Cardiac septum (tissue), 1 donor: ENCODE measurements at regions of chr9 and their contacts with region 1.

Region 1: DNA sequence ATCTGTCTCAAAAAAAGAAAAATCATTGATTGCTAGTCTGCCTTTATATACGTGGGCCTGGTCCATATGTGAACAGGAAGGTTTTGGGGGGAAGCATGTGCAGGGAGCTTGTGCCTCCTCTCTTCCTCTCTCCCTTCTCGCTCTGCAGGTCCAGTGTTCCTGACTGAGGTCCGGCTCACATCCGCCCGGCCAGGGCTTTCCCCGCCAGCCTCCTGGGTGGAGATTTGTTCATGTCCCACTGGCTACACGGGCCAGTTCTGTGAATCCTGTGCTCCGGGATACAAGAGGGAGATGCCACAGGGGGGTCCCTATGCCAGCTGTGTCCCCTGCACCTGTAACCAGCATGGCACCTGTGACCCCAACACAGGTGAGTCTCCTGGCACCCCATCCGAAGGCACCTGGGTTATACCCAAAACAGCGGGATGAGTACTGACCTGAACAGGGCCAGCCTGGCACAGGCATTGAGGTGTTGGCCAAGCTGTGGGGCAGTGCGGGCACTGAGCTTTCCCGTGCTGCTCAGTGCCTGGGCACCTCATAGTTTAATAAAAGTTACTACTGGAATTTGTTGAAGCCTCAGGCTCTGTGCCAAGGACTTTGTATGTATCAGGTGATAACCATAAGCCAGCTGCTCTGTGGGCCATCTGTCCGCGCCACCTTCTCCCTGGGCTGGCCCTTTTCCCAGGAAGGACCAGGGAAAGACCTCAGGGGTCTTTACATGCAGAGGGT is 39.4 kb upstream of the AIF1L start:
- DNase-seq: no peak

Region 2: DNA sequence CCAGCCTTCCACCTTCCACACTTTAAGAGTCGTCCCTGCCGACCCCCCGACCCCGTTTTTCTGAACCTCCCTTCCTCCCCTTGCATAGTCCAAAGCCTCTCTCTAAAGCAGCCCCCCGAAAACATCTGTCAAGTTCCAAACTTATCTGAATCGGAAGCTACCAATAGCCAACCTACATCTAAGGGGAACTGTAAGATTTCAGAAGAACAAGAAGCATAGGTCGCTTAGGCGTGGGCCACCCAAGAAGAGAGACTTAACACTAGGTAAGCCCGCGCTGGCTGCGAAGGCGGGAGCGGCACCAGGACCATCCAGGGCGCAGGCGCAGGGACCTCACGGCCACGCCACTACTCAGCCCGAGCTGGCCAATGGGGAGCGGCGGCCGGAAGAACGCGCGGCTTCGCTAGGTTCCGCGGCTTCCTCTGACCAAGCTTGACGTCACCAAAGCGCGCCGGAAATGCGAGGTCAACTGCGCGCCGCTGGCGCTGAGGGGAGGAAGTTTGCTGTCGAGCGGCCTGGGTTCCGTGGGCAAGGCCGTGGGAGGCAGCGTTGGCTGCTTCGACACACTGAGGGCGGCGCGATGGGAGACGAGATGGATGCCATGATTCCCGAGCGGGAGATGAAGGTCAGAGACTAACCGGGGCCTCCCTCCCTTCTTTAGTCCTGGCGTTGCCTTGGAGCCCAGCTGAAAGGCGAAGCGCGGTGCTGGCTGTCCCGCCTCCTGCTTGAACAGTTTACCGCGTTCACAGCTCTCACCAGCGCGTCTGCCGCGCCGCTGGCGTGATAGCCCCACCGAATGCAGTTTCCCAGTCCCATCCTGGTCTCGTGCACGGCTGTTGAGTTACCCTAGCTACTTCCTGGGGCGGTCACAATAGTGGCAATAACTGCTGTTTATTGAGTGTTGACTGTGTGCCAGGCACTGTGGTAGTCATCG is 68.4 kb after region 1 on chr9 and contains the start of gene NUP214:
- intact Hi-C with region 1: loop called (anchors 5 kb)
- DNase-seq: peak; percentile 100
- total RNA-seq, gene NUP214: 22.9 TPM